ENCODE measurements at regions of chr3 and their contacts with region 1.

Region 1: GRCh38 chr3:160003520-160004128 is 15.0 kb downstream of the IL12A start:
- DNase-seq: peak in 1 of 2 experiments; percentile 76
- H3K4me3 ChIP-seq: no peak overlapping the region
- H3K27ac ChIP-seq: no peak overlapping the region
- H3K4me1 ChIP-seq: peaks cover 0 to 6% (median 3%) of the 10 kb centered on the region in 4 experiments; a peak in 3 of 7 replicates
- H3K27me3 ChIP-seq: no peaks in the 10 kb centered on the region
- CTCF ChIP-seq: peak; percentile 76 to 78 (median 77)
- EP300 ChIP-seq: no peak
- POLR2A ChIP-seq: no peak
- RAD21 ChIP-seq: peak; percentile 65 to 76

Region 2: DNA sequence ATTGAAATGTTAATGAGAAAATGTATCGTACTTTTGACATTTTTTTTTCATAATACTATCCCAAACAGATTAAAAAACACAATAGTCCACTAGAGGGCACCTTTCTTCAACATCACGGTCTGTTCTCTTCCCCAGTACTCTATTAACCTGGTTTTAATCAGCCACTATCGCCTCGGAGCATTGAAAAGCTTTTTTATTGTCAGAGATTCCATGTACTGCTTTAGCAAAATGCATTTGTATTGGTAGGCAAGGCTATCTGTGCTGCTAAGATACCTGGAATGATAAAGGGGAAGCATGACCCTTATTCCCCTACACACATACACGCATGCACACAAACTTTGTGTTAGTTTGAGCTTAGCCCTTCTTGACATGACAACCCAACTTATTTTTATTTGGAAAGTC is 175.1 kb before region 1 on chr3:
- CTCF ChIA-PET with region 1: interaction called, 109 read pairs
- POLR2A ChIA-PET with region 1: no interaction called
- DNase-seq: no peak
- H3K4me3 ChIP-seq: no peak overlapping the region
- H3K27ac ChIP-seq: no peak overlapping the region
- H3K4me1 ChIP-seq: no peaks in the 10 kb centered on the region
- H3K27me3 ChIP-seq: no peaks in the 10 kb centered on the region
- CTCF ChIP-seq: peak in 2 of 3 experiments; percentile 33 to 38; a peak in 2 of 4 replicates
- EP300 ChIP-seq: no peak
- POLR2A ChIP-seq: no peak
- RAD21 ChIP-seq: peak; percentile 56 to 62

Region 3: DNA sequence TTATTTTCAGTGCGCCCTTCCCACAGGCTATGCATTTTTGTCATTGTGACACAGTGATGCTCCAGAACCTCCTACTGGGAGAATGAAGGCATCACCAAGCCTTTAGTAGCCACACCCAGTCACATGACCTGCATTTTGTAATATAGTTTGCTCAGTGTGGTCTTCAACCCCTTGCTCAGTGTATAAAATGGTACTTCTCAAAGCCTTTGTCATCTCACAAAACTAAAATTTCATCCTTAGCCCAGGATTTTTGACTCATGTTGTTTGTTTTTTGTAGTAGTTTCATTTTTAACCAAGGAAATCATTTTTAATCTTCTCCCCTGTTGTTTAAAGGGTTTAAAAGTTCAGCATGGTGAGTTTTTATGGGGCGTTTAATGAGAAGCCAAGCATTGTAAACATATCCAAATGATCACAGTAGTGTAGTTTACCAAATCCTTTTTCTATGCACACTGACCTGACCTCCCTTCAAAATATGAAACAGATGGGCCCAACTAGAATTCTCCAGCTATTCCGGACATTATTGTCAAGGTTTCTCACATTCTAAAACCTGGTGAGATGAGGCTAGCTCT is 138.5 kb before region 1 on chr3:
- CTCF ChIA-PET with region 1: interaction called, 16 read pairs
- POLR2A ChIA-PET with region 1: no interaction called
- DNase-seq: no peak
- H3K4me3 ChIP-seq: no peak overlapping the region
- H3K27ac ChIP-seq: no peak overlapping the region
- H3K4me1 ChIP-seq: peaks cover 0 to 6% (median 4%) of the 10 kb centered on the region in 4 experiments; a peak in 3 of 7 replicates
- H3K27me3 ChIP-seq: no peaks in the 10 kb centered on the region
- CTCF ChIP-seq: no peak
- EP300 ChIP-seq: no peak
- POLR2A ChIP-seq: no peak
- RAD21 ChIP-seq: no peak

Region 4: DNA sequence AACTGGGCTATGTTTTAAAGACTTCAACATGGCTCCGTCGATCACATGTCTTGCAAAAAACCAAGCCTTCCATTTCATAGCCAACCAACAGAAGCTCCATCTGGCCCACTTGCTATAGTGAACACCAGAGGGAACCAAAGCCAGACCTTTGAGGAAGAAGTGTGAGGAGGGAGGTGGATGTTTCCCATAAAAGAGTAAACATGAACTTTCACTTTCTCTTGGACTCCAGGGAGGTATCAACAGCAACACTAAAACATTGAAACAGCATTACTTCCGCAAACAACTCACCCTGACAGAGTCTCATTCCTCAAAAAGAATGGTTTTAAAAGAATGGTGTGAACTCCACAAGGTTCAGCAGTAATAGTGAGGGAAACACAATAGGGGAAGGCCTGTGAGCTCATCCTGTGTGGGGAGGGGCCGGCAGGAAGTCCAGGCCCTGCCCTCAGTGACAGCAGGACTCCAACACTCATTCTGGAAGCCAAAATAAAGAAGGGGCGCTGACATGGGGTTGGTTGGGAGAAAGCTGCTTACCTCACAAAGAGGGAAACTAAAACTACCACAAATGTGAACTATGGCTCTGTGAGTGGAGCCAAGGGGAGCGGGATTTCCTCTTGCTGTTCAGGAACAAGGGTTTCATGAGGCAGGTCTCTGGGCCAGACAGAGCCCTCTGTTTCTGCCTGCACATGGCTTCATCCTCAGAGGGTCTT is 74.0 kb before region 1 on chr3:
- CTCF ChIA-PET with region 1: interaction called, 17 read pairs
- POLR2A ChIA-PET with region 1: no interaction called
- DNase-seq: no peak
- H3K4me3 ChIP-seq: no peak overlapping the region
- H3K27ac ChIP-seq: no peak overlapping the region
- H3K4me1 ChIP-seq: no peaks in the 10 kb centered on the region
- H3K27me3 ChIP-seq: no peaks in the 10 kb centered on the region
- CTCF ChIP-seq: peak in 1 of 3 experiments; percentile 10; a peak in 1 of 4 replicates
- EP300 ChIP-seq: no peak
- POLR2A ChIP-seq: no peak
- RAD21 ChIP-seq: peak; percentile 32; a peak in 3 of 4 replicates

Region 5: DNA sequence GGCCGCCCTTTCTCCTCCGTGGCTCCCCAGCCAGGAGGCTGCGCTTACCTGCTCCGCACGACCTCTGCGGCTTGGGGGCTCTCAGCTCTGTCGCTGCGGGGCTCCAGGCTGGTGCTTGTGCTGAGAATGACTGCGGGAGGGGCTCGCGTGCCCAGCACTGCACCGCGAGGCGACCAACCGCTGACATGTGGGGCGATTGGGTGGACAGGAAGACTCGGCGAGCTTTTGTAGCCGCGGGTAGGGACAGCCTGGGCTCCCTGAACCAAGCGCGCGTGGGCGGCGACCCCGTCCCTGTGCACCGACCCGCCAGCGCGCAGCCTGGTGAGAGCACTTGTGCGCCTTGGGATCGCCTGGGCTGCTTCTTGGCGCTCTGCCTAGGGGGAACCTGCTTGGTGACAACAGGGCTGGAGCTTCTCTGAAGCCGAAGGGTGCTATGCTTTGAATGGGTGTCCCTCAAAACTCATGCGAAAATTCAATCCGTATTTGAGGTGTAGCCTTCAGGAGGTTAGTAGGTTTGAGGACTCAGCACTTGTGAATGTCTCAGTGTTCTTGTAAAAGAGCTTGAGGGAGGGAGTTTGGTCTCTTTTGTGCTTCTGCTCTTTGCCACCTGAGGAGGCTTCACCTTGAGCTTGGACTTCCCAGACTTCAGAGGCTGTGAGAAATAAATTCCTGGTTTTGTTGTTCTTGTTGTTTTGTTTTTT is 35.4 kb after region 1 on chr3:
- CTCF ChIA-PET with region 1: interaction called, 12 read pairs
- POLR2A ChIA-PET with region 1: no interaction called
- DNase-seq: peak; percentile 5 to 60
- H3K4me3 ChIP-seq: peak overlapping the region; percentile 45 to 69 (median 58)
- H3K27ac ChIP-seq: no peak overlapping the region
- H3K4me1 ChIP-seq: peaks cover 0 to 4% (median 4%) of the 10 kb centered on the region in 4 experiments; a peak in 2 of 7 replicates
- H3K27me3 ChIP-seq: peaks cover 0 to 9% (median 6%) of the 10 kb centered on the region in 4 experiments; a peak in 5 of 7 replicates
- CTCF ChIP-seq: no peak
- EP300 ChIP-seq: no peak
- POLR2A ChIP-seq: no peak
- RAD21 ChIP-seq: no peak; a peak in 1 of 4 replicates

Measured in H1 (cell line).